Aorta (tissue), 5 donors: ENCODE measurements at regions of chr2 and their contacts with region 1.

Region 1: GRCh38 chr2:238420878-238421694 is 5.6 kb upstream of the ASB1 start:
- DNase-seq: no peak
- ATAC-seq: no peak
- H3K4me3 ChIP-seq: no peak overlapping the region
- H3K27ac ChIP-seq: peak overlapping the region in 1 of 2 donors; percentile 48
- H3K4me1 ChIP-seq: no peaks in the 10 kb centered on the region
- H3K27me3 ChIP-seq: no peaks in the 10 kb centered on the region

Region 2: GRCh38 chr2:238380391-238381184 is 40.5 kb before region 1 on chr2:
- intact Hi-C with region 1: loop called in 1 of 2 experiments (anchors 5 kb)
- DNase-seq: no peak
- ATAC-seq: no peak
- H3K4me3 ChIP-seq: no peak overlapping the region
- H3K27ac ChIP-seq: peak overlapping the region in 1 of 2 donors; percentile 39
- H3K4me1 ChIP-seq: no peaks in the 10 kb centered on the region
- H3K27me3 ChIP-seq: no peaks in the 10 kb centered on the region

Region 3: DNA sequence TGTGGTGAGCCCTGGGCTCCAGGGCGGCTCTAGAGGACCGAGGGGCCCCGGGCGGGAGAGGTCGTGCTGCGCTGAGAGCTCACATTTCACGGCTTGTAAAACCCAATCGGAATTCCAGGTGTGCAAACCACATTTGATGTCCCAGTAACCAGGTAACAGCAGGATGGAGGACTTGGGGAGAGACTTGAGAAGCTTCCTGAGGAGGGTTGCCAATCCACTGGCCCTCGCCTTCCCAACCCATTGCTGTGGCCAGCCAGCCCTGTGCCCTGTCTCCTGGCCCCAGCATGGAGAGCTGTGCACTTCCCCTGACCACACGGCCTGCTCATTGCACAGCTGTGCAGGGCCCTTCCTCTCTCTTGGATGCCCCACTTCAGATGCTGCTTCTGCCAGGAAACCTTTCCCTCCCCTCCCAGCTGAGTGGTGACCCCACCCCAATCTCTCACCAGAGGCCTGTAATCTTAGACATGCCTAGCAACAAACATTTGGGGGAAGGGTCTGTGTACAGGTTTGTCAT is 45.2 kb after region 1 on chr2:
- intact Hi-C with region 1: no loop called
- DNase-seq: no peak
- ATAC-seq: no peak
- H3K4me3 ChIP-seq: no peak overlapping the region
- H3K27ac ChIP-seq: no peak overlapping the region
- H3K4me1 ChIP-seq: no peaks in the 10 kb centered on the region
- H3K27me3 ChIP-seq: no peaks in the 10 kb centered on the region